Activated naive CD4-positive, alpha-beta T cell treated with anti-CD3 and anti-CD28 coated beads for 36 hours (primary cell): ENCODE measurements at regions of chr14 and their contacts with region 1.

Region 1: GRCh38 chr14:88005978-88006851 is 1.3 kb downstream of the GPR65 start:
- DNase-seq: peak; percentile 85
- H3K4me3 Mint-ChIP-seq: peak overlapping the region; percentile 88
- H3K27ac Mint-ChIP-seq: peak overlapping the region; percentile 95
- H3K4me1 Mint-ChIP-seq: peaks cover 63% of the 10 kb centered on the region
- H3K27me3 Mint-ChIP-seq: no peaks in the 10 kb centered on the region

Region 2: DNA sequence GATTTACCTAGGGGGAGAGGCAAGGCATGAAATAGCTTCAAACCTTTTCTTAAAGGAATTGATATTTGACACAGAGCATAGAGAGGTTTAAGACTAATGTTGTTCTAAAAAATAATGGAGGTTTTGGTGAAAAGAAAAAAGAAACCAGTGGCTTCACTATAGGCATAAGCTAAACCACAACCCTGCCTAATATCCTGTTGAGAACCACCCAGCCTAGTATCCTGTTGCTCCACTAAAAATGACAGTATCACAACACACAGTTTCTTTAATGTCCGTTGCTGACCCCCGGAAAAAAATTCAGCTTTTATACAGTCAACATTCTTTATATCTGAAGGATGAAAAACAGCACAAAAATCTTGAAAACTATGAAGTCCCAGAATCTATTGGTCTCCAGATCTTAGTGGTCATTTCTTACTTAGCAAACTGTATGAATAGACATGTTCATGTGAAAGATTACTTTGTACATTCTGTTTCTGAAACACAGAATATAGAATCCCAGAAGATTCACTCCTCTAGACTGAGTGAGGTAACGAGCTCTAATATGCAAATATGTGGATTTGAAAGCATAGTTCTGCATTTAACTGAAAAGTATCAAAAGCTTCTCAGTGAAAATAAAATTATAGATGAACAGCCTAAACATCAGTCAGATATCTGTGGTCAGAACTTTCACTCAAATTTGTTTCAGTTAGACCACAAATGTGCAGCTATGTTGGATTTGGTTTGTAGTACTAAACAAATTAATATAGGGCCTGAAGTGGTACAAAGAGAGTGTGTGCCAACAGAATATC is 53.7 kb before region 1 on chr14:
- CTCF ChIA-PET with region 1: no interaction called
- intact Hi-C with region 1: loop called (anchors 5 kb)
- DNase-seq: no peak
- H3K4me3 Mint-ChIP-seq: no peak overlapping the region
- H3K27ac Mint-ChIP-seq: peak overlapping the region; percentile 50
- H3K4me1 Mint-ChIP-seq: peaks cover 18% of the 10 kb centered on the region
- H3K27me3 Mint-ChIP-seq: no peaks in the 10 kb centered on the region

Region 3: DNA sequence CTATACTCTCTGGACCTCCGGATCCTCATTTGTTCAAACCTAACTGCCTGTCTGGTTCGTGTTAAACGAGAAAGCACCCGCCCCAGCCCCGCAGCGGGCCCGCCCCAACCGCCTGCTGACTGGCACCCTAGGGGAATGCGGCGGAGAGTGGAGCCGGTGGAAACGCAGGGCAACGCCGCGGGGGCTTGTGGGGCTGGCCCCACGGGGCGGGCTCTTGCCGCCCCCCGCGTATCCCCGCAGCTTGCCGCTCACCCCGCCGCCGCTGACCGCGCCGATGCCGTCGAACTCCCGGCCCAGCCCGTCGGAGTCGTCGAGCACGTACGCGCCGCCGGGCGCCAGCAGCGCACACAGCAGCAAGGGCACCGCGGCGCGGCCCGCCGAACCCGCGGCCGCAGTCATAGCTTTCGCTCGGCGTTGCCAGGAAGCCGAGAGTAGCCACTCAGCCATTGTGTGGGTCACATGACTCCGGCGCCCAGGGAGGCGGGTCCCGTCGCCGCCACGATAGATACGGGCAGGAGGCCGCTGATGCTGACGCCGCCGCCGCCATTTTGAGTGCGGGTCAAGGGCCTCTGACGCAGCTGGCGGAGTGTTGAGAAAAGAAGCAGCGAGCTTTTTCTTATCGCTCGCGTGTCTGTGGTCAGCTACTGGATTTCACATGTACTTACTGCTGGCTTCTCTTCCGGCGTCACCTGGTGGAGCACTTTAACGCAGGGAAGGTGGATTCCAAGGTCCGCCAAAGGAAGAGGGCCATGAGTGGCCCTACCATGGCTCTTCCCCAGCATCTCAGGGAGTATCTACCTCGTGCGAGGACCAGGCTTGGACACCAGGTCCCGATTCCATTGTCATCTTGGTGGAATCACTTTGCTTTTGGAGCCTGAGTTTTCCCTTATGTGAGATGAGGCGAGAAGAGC is 13.2 kb before region 1 on chr14 and contains the start of gene GALC:
- CTCF ChIA-PET with region 1: interaction called, 22 read pairs
- intact Hi-C with region 1: loop called (anchors 1 kb)
- DNase-seq: peak; percentile 96
- H3K4me3 Mint-ChIP-seq: peak within 1 kb of the TSS; percentile 81
- H3K27ac Mint-ChIP-seq: peak within 1 kb of the TSS; percentile 96
- H3K4me1 Mint-ChIP-seq: peaks cover 45% of the 10 kb centered on the region
- H3K27me3 Mint-ChIP-seq: no peaks in the 10 kb centered on the region
- total RNA-seq, gene GALC: 11.2 to 12.7 TPM

Region 4: DNA sequence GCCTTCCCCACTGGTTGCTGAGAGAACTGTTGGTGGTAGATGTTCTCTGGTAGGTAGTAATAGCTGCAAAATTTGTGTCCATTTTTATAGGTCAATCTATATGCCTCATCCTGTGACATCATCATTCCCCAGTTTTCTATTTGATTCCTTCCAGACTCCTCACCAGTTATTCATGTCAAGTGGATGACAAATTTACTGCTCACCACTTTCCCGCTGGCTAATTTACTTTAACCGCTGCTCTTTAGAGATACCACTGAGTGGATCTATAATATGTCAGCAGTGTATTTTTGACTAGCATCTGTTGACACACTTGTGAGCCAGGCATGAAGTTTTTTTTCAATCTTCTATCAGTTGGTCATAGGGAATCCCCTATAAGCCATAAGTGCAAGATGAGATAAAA is 23.3 kb after region 1 on chr14:
- CTCF ChIA-PET with region 1: interaction called, 4 read pairs
- intact Hi-C with region 1: loop called (anchors 1 kb)
- DNase-seq: peak; percentile 28
- H3K4me3 Mint-ChIP-seq: no peak overlapping the region
- H3K27ac Mint-ChIP-seq: peak overlapping the region; percentile 8
- H3K4me1 Mint-ChIP-seq: peaks cover 53% of the 10 kb centered on the region
- H3K27me3 Mint-ChIP-seq: no peaks in the 10 kb centered on the region

Region 5: GRCh38 chr14:88044851-88045339 is 38.7 kb after region 1 on chr14:
- CTCF ChIA-PET with region 1: no interaction called
- intact Hi-C with region 1: loop called (anchors 1 kb)
- DNase-seq: peak; percentile 20
- H3K4me3 Mint-ChIP-seq: no peak overlapping the region
- H3K27ac Mint-ChIP-seq: peak overlapping the region; percentile 69
- H3K4me1 Mint-ChIP-seq: peaks cover 14% of the 10 kb centered on the region
- H3K27me3 Mint-ChIP-seq: no peaks in the 10 kb centered on the region

Region 6: GRCh38 chr14:88129306-88130056 is 123.3 kb after region 1 on chr14:
- CTCF ChIA-PET with region 1: no interaction called
- intact Hi-C with region 1: no loop called
- DNase-seq: peak; percentile 13
- H3K4me3 Mint-ChIP-seq: no peak overlapping the region
- H3K27ac Mint-ChIP-seq: no peak overlapping the region
- H3K4me1 Mint-ChIP-seq: peaks cover 19% of the 10 kb centered on the region
- H3K27me3 Mint-ChIP-seq: peaks cover 5% of the 10 kb centered on the region

Region 7: DNA sequence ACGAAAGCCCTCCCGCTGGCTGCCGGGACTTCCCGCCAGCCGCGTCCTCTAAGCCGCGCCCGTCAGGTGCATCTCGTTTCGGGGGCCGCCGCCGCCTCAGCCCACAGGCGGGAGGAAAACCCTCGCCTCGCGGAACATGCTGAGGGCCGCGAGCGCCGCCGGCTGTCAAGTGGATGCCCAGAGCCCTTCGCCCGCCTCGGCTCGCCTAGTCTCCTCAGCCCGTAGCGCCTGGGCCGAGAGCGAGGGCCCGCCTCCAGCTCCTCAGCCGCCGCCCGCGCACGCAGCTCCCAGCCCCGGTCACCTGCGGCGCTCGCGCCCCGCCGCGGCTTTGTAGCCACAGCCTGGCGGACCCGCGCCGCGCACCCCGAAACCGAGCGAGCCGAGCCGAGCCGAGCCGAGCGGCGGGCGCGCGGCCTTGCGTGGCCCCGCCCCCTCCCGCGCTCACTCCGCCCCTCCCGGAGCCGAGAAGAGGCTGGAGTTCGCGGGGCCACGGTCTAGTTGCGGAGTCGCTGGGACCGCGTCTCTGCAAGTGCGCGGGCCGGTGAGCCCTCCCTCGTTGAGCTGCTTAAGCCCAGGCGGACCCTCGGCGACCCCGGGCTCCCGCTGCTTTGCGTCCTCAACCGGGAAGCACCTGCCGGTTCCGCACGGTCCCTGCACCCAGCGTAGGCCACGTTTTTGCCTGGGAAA is 786.5 kb after region 1 on chr14 and contains the start of gene EML5:
- CTCF ChIA-PET with region 1: no interaction called
- intact Hi-C with region 1: loop called (anchors 5 kb)
- DNase-seq: peak; percentile 86
- H3K4me3 Mint-ChIP-seq: peak within 1 kb of the TSS; percentile 88
- H3K27ac Mint-ChIP-seq: peak within 1 kb of the TSS; percentile 71
- H3K4me1 Mint-ChIP-seq: peaks cover 18% of the 10 kb centered on the region
- H3K27me3 Mint-ChIP-seq: no peaks in the 10 kb centered on the region
- total RNA-seq, gene EML5: 3.7 to 3.8 TPM

Region 8: DNA sequence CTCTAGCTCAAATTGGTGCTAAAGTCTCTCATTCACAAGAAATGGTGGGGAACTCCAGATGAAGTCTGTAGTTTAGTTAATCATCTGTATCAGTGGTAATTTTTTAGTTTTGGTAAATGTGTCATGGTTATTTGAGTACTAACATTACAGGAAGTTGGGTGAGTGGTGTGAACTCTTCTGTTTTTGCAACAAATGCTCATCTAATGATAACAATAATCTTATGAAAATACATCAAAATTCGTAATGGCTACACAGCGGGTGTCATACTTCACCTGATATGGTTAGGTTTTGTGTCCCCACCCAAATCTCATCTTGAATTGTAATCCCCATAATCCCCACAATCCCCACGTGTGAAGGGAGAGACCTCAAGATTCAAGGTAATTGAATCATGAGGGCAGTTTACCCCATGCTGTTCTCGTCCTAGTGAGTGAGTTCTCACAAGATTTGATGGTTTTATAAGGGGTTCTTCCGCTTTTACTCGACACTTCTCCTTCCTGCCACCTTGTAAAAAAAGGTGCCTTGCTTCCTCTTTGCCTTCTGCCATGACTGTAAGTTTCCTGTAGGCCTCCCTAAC is 1620.1 kb after region 1 on chr14:
- CTCF ChIA-PET with region 1: no interaction called
- intact Hi-C with region 1: loop called (anchors 2 kb)
- DNase-seq: peak; percentile 46
- H3K4me3 Mint-ChIP-seq: no peak overlapping the region
- H3K27ac Mint-ChIP-seq: peak overlapping the region; percentile 96
- H3K4me1 Mint-ChIP-seq: peaks cover 79% of the 10 kb centered on the region
- H3K27me3 Mint-ChIP-seq: no peaks in the 10 kb centered on the region